AG04449 (cell line): ENCODE measurements at regions of chr10 and their contacts with region 1.

Region 1: GRCh38 chr10:72319416-72320254 is 35.1 kb downstream of the DNAJB12 start:
- DNase-seq: no peak
- H3K4me3 ChIP-seq: peak overlapping the region; percentile 47
- CTCF ChIP-seq: no peak

Region 2: DNA sequence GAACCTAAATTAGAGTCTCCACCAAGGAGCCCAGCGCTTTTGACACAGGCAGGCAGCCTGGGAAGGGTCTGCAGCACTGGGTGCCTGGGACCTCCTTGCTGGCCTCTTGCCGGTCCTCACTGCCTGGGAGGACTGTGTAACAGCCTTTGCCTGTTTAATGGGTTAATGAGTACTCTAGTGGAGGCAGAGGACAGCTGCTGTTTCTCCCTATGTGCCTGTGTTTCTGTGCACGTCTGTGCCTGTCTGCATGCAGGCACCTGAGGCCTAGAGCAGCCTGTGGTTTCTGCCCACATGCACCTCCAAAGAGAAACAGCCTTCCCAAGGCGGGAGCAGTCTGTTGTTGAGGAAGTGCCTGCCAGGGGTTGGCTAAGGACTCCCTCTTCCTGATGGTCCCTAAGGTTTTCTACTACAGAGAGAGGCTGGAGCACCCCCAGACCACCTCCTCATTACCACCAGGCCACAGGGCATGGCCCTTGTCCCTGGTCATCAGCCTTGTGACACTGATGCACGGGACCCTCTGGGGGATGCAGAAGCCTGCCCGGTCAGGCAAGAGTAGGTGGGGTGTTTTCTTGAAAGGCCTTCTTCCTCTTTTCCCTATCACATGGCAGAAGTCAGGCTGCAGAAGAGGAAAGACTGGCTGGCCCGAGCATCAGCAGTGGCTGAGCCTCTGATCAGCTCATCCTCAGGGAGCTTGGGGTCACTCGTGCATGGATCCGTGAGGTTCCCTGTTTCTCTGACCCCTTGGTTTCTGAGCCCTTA is 986.3 kb before region 1 on chr10:
- CTCF ChIA-PET with region 1: no interaction called
- POLR2A ChIA-PET with region 1: no interaction called
- DNase-seq: no peak
- H3K4me3 ChIP-seq: no peak overlapping the region
- CTCF ChIP-seq: no peak

Region 3: GRCh38 chr10:72297968-72298773 is 21.5 kb before region 1 on chr10:
- CTCF ChIA-PET with region 1: interaction called, 3 read pairs
- POLR2A ChIA-PET with region 1: interaction called, 15 read pairs
- DNase-seq: peak; percentile 87
- H3K4me3 ChIP-seq: peak overlapping the region; percentile 64
- CTCF ChIP-seq: no peak